Naive thymus-derived CD8-positive, alpha-beta T cell (primary cell): ENCODE measurements at regions of chr12 and their contacts with region 1.

Region 1: GRCh38 chr12:120199595-120200306 is 1.2 kb downstream of the RPLP0 start:
- DNase-seq: no peak
- ATAC-seq: no peak
- H3K4me3 Mint-ChIP-seq: peak overlapping the region; percentile 92 to 99 (median 98)
- H3K27ac Mint-ChIP-seq: peak overlapping the region; percentile 92 to 99 (median 98)
- H3K4me1 Mint-ChIP-seq: peaks cover 12 to 51% (median 35%) of the 10 kb centered on the region in 4 donors
- H3K27me3 Mint-ChIP-seq: peaks cover 0 to 2% (median 0%) of the 10 kb centered on the region in 5 donors

Region 2: DNA sequence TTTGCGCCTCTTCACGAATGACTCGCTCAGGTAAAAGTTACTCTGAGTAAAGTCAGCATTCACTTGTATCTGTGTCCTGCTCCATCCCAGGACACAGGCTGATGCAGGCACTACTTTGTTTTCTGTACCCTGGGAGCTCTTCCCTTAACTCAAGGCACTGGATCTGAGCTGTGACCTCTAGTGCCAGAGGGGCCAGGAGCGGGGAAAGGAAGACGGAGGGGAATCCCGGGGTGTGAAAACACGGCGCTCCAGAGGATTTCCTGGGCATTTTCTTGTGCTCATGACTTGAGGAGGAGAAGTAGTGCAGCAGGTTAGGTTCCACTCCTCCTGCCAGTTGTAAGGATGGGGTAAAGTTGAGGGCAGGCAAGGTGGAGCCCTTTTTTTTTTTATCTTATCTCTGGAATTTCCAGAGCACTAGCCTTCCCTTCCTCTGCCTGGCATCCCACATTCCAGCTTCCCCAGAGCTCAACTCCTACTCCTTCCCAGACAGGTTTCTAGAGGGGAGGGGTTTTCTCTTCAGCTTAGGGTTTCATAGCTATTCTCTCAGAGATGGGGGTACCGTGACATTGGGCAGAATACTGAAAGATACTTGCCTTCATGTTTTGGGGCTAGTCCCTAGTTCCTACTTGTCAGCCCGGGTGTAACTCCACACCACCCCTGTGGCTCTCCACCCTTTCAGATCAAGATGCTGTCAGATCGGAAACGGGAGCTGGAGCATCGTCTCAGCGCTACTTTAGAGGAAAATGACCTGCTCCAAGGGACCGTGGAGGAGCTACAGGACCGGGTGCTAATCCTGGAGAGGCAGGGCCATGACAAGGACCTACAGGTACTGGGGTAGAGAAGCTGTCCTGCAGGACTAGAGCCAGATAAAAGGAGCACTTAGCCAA is 135.5 kb before region 1 on chr12:
- POLR2A ChIA-PET with region 1: no interaction called
- DNase-seq: no peak
- ATAC-seq: no peak
- H3K4me3 Mint-ChIP-seq: no peak overlapping the region
- H3K27ac Mint-ChIP-seq: peak overlapping the region in 2 of 10 donors; percentile 36 to 53
- H3K4me1 Mint-ChIP-seq: no peaks in the 10 kb centered on the region
- H3K27me3 Mint-ChIP-seq: no peaks in the 10 kb centered on the region

Region 3: GRCh38 chr12:120116792-120117651 is 82.7 kb before region 1 on chr12:
- POLR2A ChIA-PET with region 1: interaction called, 35 read pairs
- DNase-seq: peak; percentile 94 to 98 (median 98)
- ATAC-seq: peak; percentile 77
- H3K4me3 Mint-ChIP-seq: peak overlapping the region; percentile 70 to 95 (median 90)
- H3K27ac Mint-ChIP-seq: peak overlapping the region; percentile 76 to 95 (median 88)
- H3K4me1 Mint-ChIP-seq: peaks cover 40 to 81% (median 77%) of the 10 kb centered on the region in 4 donors
- H3K27me3 Mint-ChIP-seq: no peaks in the 10 kb centered on the region

Region 4: GRCh38 chr12:120132863-120133385 is 66.8 kb before region 1 on chr12:
- POLR2A ChIA-PET with region 1: no interaction called
- DNase-seq: no peak
- ATAC-seq: no peak
- H3K4me3 Mint-ChIP-seq: no peak overlapping the region
- H3K27ac Mint-ChIP-seq: peak overlapping the region in 1 of 10 donors; percentile 68
- H3K4me1 Mint-ChIP-seq: peaks cover 0 to 8% (median under 1%) of the 10 kb centered on the region in 4 donors
- H3K27me3 Mint-ChIP-seq: no peaks in the 10 kb centered on the region

Region 5: GRCh38 chr12:120249875-120250795 is 50.4 kb after region 1 on chr12:
- POLR2A ChIA-PET with region 1: interaction called, 19 read pairs
- DNase-seq: peak in 3 of 10 donors; percentile 33 to 49 (median 37)
- ATAC-seq: no peak
- H3K4me3 Mint-ChIP-seq: peak overlapping the region; percentile 59 to 86 (median 78)
- H3K27ac Mint-ChIP-seq: peak overlapping the region; percentile 58 to 98 (median 94)
- H3K4me1 Mint-ChIP-seq: peaks cover 45 to 86% (median 84%) of the 10 kb centered on the region in 4 donors
- H3K27me3 Mint-ChIP-seq: peaks cover 0 to 3% (median 0%) of the 10 kb centered on the region in 5 donors

Region 6: DNA sequence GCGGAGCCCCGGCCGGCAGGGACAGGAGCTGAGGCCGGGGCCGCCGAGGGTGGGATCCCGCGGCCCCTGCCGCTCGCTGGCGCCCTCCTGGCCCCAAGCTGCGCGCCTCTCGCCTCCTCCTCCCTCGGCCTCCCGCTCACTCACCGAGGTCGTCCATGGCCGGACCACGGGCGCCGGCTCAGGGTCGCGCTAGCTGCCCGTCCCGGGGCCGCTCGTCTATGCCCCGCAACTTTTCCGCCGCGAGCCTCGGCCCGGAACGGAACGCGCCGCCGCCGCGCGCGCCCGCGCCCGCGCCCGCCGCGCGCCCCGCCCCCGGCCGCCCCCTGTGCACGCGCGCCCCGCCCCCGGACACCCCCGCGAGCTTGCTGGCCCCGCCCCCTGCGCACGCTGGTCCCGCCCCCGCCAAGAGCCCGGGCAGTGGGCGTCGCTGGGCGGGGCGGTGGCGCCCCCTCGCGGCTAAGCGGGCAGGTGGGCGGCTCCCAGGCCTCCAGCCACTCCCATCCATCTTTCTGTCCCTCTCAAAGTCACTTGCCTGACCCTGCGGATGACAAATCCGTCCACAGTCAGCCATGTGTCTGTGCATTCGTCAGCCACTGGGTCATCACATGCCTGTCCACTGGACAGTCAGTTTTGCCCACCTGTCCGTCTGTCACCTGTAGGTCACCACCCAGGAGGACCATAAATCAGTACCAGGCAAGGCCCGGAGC is 65.9 kb after region 1 on chr12 and contains the start of gene PXN:
- POLR2A ChIA-PET with region 1: interaction called, 76 read pairs
- DNase-seq: peak; percentile 82 to 100 (median 92)
- ATAC-seq: peak; percentile 83 to 84
- H3K4me3 Mint-ChIP-seq: peak within 1 kb of the TSS; percentile 89 to 96 (median 94)
- H3K27ac Mint-ChIP-seq: peak within 1 kb of the TSS; percentile 82 to 96 (median 92)
- H3K4me1 Mint-ChIP-seq: peaks cover 16 to 49% (median 43%) of the 10 kb centered on the region in 4 donors
- H3K27me3 Mint-ChIP-seq: peaks cover 0 to 2% (median 0%) of the 10 kb centered on the region in 5 donors
- polyA plus RNA-seq, gene PXN: 64.3 to 95.6 (median 80.4) TPM

Region 7: GRCh38 chr12:120317224-120318105 is 117.7 kb after region 1 on chr12:
- POLR2A ChIA-PET with region 1: interaction called, 16 read pairs
- DNase-seq: peak; percentile 99 to 100 (median 100)
- ATAC-seq: peak; percentile 99
- H3K4me3 Mint-ChIP-seq: peak overlapping the region; percentile 86 to 95 (median 92)
- H3K27ac Mint-ChIP-seq: peak overlapping the region; percentile 90 to 98 (median 97)
- H3K4me1 Mint-ChIP-seq: peaks cover 5 to 15% (median 13%) of the 10 kb centered on the region in 4 donors
- H3K27me3 Mint-ChIP-seq: no peaks in the 10 kb centered on the region